ENCODE measurements at regions of chr1 and their contacts with region 1.

Region 1: GRCh38 chr1:156625436-156626078 is 6.3 kb downstream of the HAPLN2 start:
- DNase-seq: peak; percentile 47
- H3K4me3 ChIP-seq: no peak overlapping the region
- H3K27ac ChIP-seq: no peak overlapping the region
- H3K4me1 ChIP-seq: peaks cover 10% of the 10 kb centered on the region
- H3K27me3 ChIP-seq: peaks cover 36% of the 10 kb centered on the region in 2 experiments
- CTCF ChIP-seq: peak; percentile 69 to 90
- POLR2A ChIP-seq: no peak

Region 2: DNA sequence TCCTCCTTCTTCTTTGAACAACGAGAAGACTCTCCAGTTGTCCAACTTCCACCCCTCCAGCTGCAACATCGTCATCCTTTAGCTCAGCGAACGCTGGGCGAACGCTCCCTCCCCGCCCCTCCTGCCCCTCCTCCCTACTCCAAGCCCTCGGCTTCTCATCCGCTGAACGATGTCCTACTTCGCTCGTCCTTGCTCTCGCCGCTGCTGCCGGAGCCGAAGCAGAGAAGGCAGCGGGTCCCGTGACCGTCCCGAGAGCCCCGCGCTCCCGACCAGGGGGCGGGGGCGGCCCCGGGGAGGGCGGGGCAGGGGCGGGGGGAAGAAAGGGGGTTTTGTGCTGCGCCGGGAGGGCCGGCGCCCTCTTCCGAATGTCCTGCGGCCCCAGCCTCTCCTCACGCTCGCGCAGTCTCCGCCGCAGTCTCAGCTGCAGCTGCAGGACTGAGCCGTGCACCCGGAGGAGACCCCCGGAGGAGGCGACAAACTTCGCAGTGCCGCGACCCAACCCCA is 16.3 kb after region 1 on chr1 and contains the start of gene BCAN:
- CTCF ChIA-PET with region 1: interaction called, 20 read pairs
- POLR2A ChIA-PET with region 1: no interaction called
- dilution Hi-C with region 1: no loop called
- intact Hi-C with region 1: no loop called
- DNase-seq: no peak
- H3K4me3 ChIP-seq: no peak within 1 kb of the TSS
- H3K27ac ChIP-seq: no peak within 1 kb of the TSS
- H3K4me1 ChIP-seq: no peaks in the 10 kb centered on the region
- H3K27me3 ChIP-seq: peaks cover 78 to 88% of the 10 kb centered on the region in 2 experiments
- CTCF ChIP-seq: no peak
- POLR2A ChIP-seq: no peak
- total RNA-seq, gene BCAN: not detected in 2 replicates

Region 3: DNA sequence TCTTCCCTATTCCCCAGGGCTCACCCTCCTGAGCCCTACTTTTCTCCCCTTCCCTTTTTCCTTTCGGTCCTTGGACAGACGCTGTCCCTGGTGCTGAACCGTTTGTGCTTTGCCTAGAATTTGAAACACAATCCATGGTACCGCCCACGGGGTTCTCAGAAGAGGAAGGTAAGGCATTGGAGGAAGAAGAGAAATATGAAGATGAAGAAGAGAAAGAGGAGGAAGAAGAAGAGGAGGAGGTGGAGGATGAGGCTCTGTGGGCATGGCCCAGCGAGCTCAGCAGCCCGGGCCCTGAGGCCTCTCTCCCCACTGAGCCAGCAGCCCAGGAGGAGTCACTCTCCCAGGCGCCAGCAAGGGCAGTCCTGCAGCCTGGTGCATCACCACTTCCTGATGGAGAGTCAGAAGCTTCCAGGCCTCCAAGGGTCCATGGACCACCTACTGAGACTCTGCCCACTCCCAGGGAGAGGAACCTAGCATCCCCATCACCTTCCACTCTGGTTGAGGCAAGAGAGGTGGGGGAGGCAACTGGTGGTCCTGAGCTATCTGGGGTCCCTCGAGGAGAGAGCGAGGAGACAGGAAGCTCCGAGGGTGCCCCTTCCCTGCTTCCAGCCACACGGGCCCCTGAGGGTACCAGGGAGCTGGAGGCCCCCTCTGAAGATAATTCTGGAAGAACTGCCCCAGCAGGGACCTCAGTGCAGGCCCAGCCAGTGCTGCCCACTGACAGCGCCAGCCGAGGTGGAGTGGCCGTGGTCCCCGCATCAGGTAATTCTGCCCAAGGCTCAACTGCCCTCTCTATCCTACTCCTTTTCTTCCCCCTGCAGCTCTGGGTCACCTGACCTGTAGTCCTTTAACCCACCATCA is 26.8 kb after region 1 on chr1:
- CTCF ChIA-PET with region 1: interaction called, 237 read pairs
- POLR2A ChIA-PET with region 1: no interaction called
- dilution Hi-C with region 1: no loop called
- intact Hi-C with region 1: loop called (anchors 1 kb)
- DNase-seq: peak; percentile 29
- H3K4me3 ChIP-seq: no peak overlapping the region
- H3K27ac ChIP-seq: no peak overlapping the region
- H3K4me1 ChIP-seq: peaks cover 7% of the 10 kb centered on the region
- H3K27me3 ChIP-seq: peaks cover 10 to 15% of the 10 kb centered on the region in 2 experiments
- CTCF ChIP-seq: no peak
- POLR2A ChIP-seq: no peak

Region 4: DNA sequence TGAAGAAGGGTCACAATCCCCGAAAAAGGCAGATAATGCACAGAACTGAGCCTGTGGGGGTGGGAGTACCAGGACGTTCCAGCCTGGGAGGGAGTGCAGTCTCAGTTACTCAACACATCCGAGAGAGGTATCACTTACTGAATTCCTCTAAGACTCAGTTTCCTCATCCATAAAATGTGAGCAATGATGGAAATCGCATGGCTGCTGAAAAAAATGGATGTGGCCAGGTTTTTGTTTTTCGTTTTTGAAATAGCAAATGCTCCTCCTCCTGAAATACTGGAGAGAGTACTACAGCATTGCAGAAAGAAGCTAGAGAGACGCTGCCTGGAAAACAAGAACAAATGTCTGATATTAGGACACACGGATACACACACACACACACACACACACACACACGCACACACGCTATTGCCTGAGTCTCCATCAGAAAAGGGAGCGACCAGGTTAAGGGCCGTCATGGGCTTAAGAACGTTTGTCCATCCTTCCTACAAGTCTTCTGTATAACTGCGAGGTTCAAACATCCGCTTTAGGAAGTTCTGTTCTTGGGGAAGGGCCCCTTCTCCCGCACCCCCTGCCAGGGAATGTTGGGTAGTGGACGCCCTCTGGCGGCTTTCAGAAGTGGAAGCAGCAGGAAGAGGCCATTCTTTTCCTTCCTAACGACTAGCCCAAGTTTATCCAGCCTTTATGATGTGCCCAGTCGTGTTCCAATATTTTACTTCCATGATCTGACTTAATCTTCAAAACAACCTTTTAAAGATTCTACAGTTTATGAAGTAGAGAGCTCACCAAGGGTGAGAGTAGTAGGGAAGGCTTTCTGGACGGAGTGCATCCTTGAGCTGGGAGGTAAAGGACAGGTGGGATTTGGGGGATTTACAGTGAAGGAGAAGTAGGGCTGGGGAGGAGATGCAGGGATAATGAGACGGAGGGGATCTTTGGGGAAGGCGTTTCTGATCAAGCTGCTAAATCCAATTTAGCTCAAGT is 52.3 kb after region 1 on chr1:
- CTCF ChIA-PET with region 1: interaction called, 100 read pairs
- POLR2A ChIA-PET with region 1: no interaction called
- dilution Hi-C with region 1: no loop called
- intact Hi-C with region 1: loop called (anchors 1 kb)
- DNase-seq: peak; percentile 83
- H3K4me3 ChIP-seq: peak overlapping the region; percentile 19 to 81 (median 50)
- H3K27ac ChIP-seq: peak overlapping the region; percentile 19
- H3K4me1 ChIP-seq: peaks cover 36% of the 10 kb centered on the region
- H3K27me3 ChIP-seq: peaks cover 2 to 5% of the 10 kb centered on the region in 2 experiments
- CTCF ChIP-seq: peak; percentile 91
- POLR2A ChIP-seq: no peak

Region 5: GRCh38 chr1:156705918-156706656 is 80.5 kb after region 1 on chr1:
- CTCF ChIA-PET with region 1: interaction called, 16 read pairs
- POLR2A ChIA-PET with region 1: no interaction called
- dilution Hi-C with region 1: no loop called
- intact Hi-C with region 1: loop called (anchors 1 kb)
- DNase-seq: peak; percentile 57
- H3K4me3 ChIP-seq: peak overlapping the region in 1 of 3 experiments; percentile 4
- H3K27ac ChIP-seq: no peak overlapping the region
- H3K4me1 ChIP-seq: peaks cover 19% of the 10 kb centered on the region
- H3K27me3 ChIP-seq: peaks cover 0 to 3% of the 10 kb centered on the region in 2 experiments
- CTCF ChIP-seq: peak; percentile 76 to 87
- POLR2A ChIP-seq: no peak